ENCODE measurements at regions of chr13 and their contacts with region 1.

Region 1: GRCh38 chr13:19561585-19561984 is 253 bp upstream of the TPTE2 start:
- DNase-seq: no peak
- ATAC-seq: no peak
- H3K4me3 Mint-ChIP-seq: no peak overlapping the region
- H3K27ac Mint-ChIP-seq: no peak overlapping the region
- H3K4me1 Mint-ChIP-seq: no peaks in the 10 kb centered on the region
- H3K27me3 Mint-ChIP-seq: no peaks in the 10 kb centered on the region
- CTCF ChIP-seq: no peak

Region 2: DNA sequence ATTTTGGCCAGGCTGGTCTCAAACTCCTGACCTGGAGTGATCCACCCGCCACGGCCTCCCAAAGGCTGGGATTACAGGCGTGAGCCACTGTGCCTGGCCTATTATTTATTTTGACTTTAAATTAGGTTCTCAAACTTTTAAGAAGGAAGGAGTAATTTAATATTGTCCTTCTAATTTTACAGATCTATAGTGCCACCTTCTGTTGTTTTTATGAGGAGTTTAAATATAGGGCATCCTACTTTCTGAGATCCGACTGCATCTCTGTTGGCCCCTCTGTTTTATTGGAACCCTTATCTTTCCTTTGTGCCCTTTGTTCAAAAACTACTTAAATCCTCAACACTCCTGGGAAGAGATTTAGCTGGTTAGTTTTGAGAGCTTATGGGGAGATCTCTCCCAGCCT is 327.2 kb after region 1 on chr13:
- CTCF ChIA-PET with region 1: no interaction called
- POLR2A ChIA-PET with region 1: no interaction called
- intact Hi-C with region 1: loop called (anchors 5 kb)
- DNase-seq: no peak
- ATAC-seq: no peak
- H3K4me3 Mint-ChIP-seq: no peak overlapping the region
- H3K27ac Mint-ChIP-seq: no peak overlapping the region
- H3K4me1 Mint-ChIP-seq: no peaks in the 10 kb centered on the region
- H3K27me3 Mint-ChIP-seq: peaks cover 2% of the 10 kb centered on the region
- CTCF ChIP-seq: no peak

Measured in activated B cell treated with CpG ODN at 0.5 μM for 24 hours (primary cell).